CD4-positive, alpha-beta T cell (primary cell): ENCODE measurements at regions of chr2 and their contacts with region 1.

Region 1: DNA sequence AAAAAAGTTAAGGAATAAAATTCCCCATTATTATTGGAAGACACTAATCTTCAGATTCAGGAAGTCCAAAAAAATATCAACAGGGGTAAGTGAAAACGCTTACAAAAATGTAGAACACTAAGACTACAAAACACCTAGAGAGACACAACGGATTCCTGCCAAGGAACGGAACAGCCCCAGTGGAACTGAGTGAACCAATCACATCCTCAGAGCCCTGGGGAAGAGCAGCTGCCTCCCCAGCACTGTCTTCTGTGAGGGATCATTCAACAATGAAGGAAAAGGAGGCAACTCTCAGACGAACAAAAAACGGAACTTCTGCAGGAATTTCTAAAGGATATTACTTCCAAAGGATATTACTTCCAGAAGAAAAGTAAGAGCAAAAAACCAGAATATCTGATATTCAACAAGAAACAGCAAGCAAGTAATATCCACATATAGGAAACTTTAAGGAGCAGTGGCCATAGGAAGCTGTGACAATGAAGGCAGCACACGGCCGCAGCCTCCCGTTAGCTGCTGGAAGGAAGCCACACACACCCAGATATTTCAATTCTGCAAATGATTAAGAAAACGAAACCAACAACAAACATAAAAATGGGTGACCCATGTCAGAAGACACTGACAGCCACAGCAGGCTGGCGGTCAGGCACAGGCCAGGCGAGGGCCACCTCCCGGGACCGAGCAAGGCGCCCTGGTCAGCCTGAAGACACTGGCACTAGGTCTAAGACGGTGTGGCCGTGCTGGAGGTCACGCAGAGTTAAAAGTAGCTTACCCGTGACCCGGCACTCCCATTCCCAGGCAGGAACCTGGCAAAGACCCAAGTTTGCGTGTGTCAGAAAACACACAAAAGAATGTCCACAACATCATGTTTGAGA is 81.8 kb downstream of the HDAC4 start:
- DNase-seq: peak in 5 of 14 experiments; percentile 32 to 61 (median 57)
- ATAC-seq: no peak
- H3K4me3 ChIP-seq: peak overlapping the region; percentile 49
- H3K4me3 Mint-ChIP-seq: peak overlapping the region; percentile 90
- H3K27ac ChIP-seq: peak overlapping the region; percentile 37 to 61
- H3K27ac Mint-ChIP-seq: peak overlapping the region; percentile 97
- H3K4me1 ChIP-seq: peaks cover 69% of the 10 kb centered on the region
- H3K4me1 Mint-ChIP-seq: peaks cover 70% of the 10 kb centered on the region
- H3K27me3 ChIP-seq: no peaks in the 10 kb centered on the region
- H3K27me3 Mint-ChIP-seq: no peaks in the 10 kb centered on the region
- CTCF ChIP-seq: no peak

Region 2: GRCh38 chr2:239275044-239275685 is 43.9 kb before region 1 on chr2:
- CTCF ChIA-PET with region 1: interaction called, 10 read pairs
- POLR2A ChIA-PET with region 1: interaction called, 7 read pairs
- intact Hi-C with region 1: no loop called
- DNase-seq: peak; percentile 70 to 95 (median 80)
- ATAC-seq: peak; percentile 88
- H3K4me3 ChIP-seq: peak overlapping the region; percentile 47
- H3K4me3 Mint-ChIP-seq: peak overlapping the region; percentile 79
- H3K27ac ChIP-seq: peak overlapping the region; percentile 19 to 55
- H3K27ac Mint-ChIP-seq: peak overlapping the region; percentile 93
- H3K4me1 ChIP-seq: peaks cover 46% of the 10 kb centered on the region
- H3K4me1 Mint-ChIP-seq: peaks cover 64% of the 10 kb centered on the region
- H3K27me3 ChIP-seq: no peaks in the 10 kb centered on the region
- H3K27me3 Mint-ChIP-seq: no peaks in the 10 kb centered on the region
- CTCF ChIP-seq: no peak

Region 3: DNA sequence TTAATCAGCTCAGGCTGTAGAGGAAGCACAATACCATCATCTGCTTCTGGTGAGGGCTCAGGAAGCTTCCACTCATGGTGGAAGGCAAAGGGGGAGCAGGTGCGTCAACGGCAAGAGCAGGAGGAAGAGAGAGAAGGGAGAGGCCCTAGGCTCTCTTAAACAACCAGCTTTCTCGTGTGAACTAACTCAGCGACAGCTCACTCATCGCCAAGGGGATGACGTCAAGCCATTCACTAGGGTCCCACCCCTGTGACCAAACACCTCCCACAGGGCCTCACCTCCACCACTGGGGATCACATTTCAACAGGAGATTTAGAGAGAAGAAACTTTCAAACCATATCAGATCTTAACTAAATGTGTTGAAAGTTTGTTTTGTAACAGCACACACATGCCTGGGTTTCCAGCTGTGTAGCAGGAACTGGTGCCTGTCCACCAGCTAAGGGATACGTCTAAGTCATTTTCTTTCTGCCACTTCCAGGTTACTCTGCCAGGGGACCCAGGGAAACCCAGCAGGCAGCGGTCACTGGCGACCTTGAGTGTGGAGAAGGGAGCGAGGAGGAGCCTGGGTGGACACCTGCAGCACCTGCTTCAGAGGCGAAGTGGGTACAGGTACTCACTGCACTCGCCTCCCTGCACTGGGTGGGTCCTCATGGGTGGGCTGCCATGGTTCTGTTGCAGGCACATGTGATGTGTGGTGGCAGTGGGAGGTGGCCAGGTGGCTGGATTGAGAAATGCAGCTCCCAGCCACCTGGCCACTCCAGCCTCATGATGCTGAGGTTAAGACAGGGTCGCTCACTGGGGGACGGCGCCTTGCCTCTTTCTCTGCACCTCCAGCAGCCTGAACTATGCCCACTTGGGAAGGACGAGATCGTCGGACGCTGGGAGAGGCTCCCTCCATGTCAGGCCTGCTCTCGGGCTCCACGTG is 1108.0 kb after region 1 on chr2:
- CTCF ChIA-PET with region 1: no interaction called
- POLR2A ChIA-PET with region 1: no interaction called
- intact Hi-C with region 1: no loop called
- DNase-seq: peak in 1 of 14 experiments; percentile 23
- ATAC-seq: no peak
- H3K4me3 ChIP-seq: no peak overlapping the region
- H3K4me3 Mint-ChIP-seq: no peak overlapping the region
- H3K27ac ChIP-seq: no peak overlapping the region
- H3K27ac Mint-ChIP-seq: no peak overlapping the region
- H3K4me1 ChIP-seq: no peaks in the 10 kb centered on the region
- H3K4me1 Mint-ChIP-seq: no peaks in the 10 kb centered on the region
- H3K27me3 ChIP-seq: peaks cover 0 to 12% of the 10 kb centered on the region in 2 experiments
- H3K27me3 Mint-ChIP-seq: peaks cover 5% of the 10 kb centered on the region
- CTCF ChIP-seq: no peak